ENCODE measurements at regions of chr20 and their contacts with region 1.

Region 1: DNA sequence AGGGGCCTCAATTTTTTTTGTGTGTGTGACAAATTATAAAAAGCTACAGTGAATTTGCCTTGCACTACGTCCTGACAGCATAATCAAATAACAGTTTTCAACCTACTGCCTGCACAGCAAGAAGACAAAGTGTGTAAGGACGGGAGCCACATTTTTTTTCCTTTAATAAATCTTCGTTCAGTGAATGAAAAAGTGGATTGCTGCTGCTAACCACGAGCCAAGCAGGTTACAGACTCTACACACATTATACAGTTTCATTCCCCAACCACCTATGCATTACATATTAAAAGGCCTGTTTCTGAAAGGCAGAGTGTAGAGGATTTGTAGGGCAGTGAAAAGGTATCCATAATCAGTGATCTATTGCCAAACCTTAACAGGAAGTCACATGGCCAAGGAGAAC is 570.0 kb upstream of the BTBD3 start:
- DNase-seq: no peak
- H3K4me3 ChIP-seq: no peak overlapping the region
- H3K27ac ChIP-seq: no peak overlapping the region
- H3K4me1 ChIP-seq: no peaks in the 10 kb centered on the region
- H3K27me3 ChIP-seq: no peaks in the 10 kb centered on the region
- CTCF ChIP-seq: no peak

Region 2: DNA sequence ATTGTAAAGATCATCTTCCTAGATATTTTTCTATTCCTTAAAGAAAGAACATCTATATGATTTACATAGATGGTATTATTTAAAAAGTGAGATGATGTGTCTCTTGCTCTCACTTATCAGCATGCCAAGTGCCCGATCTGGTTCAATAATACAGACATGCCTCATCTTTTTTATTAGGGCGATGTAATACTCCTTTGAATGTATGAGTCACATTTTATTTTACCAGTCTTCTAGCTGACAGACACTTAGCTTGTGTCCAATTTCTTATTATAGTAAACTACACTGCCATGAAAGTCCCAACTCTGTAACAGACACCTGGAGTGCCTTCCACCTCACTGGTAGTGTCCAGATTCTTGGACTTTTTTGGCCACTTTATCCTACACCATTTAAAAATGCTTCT is 16.6 kb before region 1 on chr20:
- intact Hi-C with region 1: no loop called
- DNase-seq: no peak
- H3K4me3 ChIP-seq: no peak overlapping the region
- H3K27ac ChIP-seq: no peak overlapping the region
- H3K4me1 ChIP-seq: no peaks in the 10 kb centered on the region
- H3K27me3 ChIP-seq: no peaks in the 10 kb centered on the region
- CTCF ChIP-seq: no peak

Region 3: GRCh38 chr20:11411765-11412164 is 64.0 kb after region 1 on chr20:
- intact Hi-C with region 1: no loop called
- DNase-seq: no peak
- H3K4me3 ChIP-seq: no peak overlapping the region
- H3K27ac ChIP-seq: no peak overlapping the region
- H3K4me1 ChIP-seq: no peaks in the 10 kb centered on the region
- H3K27me3 ChIP-seq: no peaks in the 10 kb centered on the region
- CTCF ChIP-seq: no peak

Region 4: GRCh38 chr20:11529047-11529446 is 181.3 kb after region 1 on chr20:
- intact Hi-C with region 1: loop called (anchors 5 kb)
- DNase-seq: no peak
- H3K4me3 ChIP-seq: no peak overlapping the region
- H3K27ac ChIP-seq: no peak overlapping the region
- H3K4me1 ChIP-seq: no peaks in the 10 kb centered on the region
- H3K27me3 ChIP-seq: no peaks in the 10 kb centered on the region
- CTCF ChIP-seq: no peak

Region 5: DNA sequence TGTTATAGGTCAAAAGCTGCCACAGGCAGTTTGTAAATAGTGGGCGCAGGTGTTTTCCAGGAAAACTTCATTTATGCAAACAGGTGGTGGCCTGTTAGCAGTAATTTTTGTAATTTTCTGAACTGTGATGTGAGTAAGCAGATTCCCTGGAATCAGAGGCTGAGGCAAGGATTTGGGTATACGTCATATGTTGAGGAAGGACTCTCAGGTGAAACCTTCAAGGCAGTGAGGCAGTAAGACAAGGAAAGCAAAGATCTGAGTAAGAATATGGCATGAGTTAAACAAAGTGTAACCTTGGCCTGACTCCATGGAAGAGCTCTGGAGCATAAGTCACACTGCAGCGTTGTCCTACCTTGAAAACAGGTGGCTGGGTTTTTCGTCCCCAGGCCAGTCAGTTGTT is 278.8 kb after region 1 on chr20:
- intact Hi-C with region 1: no loop called
- DNase-seq: no peak
- H3K4me3 ChIP-seq: no peak overlapping the region
- H3K27ac ChIP-seq: no peak overlapping the region
- H3K4me1 ChIP-seq: no peaks in the 10 kb centered on the region
- H3K27me3 ChIP-seq: no peaks in the 10 kb centered on the region
- CTCF ChIP-seq: no peak

Measured in ascending aorta (tissue), 2 donors.